ENCODE measurements at regions of chr17 and their contacts with region 1.

Region 1: GRCh38 chr17:39174907-39175694 is 9.1 kb upstream of the ARL5C start:
- DNase-seq: no peak
- ATAC-seq: peak; percentile 93
- H3K4me3 ChIP-seq: no peak overlapping the region
- H3K27ac ChIP-seq: no peak overlapping the region
- H3K4me1 ChIP-seq: no peaks in the 10 kb centered on the region
- H3K27me3 ChIP-seq: no peaks in the 10 kb centered on the region
- CTCF ChIP-seq: peak; percentile 69 to 83 (median 81)
- EP300 ChIP-seq: no peak
- POLR2A ChIP-seq: no peak
- RAD21 ChIP-seq: peak; percentile 49

Region 2: DNA sequence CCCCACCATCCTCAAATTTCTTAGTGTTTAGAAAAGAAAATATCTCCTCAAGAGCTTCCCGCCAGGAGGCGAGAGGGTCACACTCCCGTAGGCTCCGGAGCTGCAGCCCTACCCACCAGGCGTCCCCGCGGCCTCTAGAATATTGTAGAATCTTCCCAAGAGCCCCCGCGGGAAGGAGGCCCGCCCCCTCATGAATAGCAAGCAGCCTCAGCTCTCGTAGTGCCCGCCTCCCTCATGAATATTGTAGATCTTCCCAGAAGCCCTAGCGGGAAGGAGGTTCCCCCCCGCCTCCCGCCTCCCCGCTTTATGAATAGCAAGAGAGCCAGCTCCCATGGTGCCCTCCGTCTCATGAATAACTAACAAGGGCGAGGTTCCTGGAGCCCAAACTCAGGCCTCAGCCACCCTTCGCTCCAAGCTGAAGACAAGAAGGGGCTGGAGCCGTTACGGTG is 207.8 kb before region 1 on chr17 and contains the start of gene FBXO47:
- CTCF ChIA-PET with region 1: no interaction called
- POLR2A ChIA-PET with region 1: no interaction called
- RAD21 ChIA-PET with region 1: no interaction called
- SMC1A ChIA-PET with region 1: no interaction called
- in situ Hi-C with region 1: no loop called
- intact Hi-C with region 1: no loop called
- DNase-seq: no peak
- ATAC-seq: peak; percentile 36; the same call in 2 of the 3 replicates
- H3K4me3 ChIP-seq: no peak within 1 kb of the TSS
- H3K27ac ChIP-seq: no peak within 1 kb of the TSS
- H3K4me1 ChIP-seq: no peaks in the 10 kb centered on the region
- H3K27me3 ChIP-seq: no peaks in the 10 kb centered on the region; a peak in 1 of 4 replicates
- CTCF ChIP-seq: no peak
- EP300 ChIP-seq: no peak
- POLR2A ChIP-seq: no peak
- RAD21 ChIP-seq: no peak
- polyA plus RNA-seq, gene FBXO47: 0.04 to 0.06 TPM

Region 3: GRCh38 chr17:39194089-39194984 is 19.2 kb after region 1 on chr17:
- CTCF ChIA-PET with region 1: interaction called, 19 read pairs
- POLR2A ChIA-PET with region 1: interaction called, 3 read pairs
- RAD21 ChIA-PET with region 1: interaction called, 4 read pairs
- SMC1A ChIA-PET with region 1: no interaction called
- in situ Hi-C with region 1: no loop called
- intact Hi-C with region 1: no loop called
- DNase-seq: no peak
- ATAC-seq: no peak
- H3K4me3 ChIP-seq: no peak overlapping the region
- H3K27ac ChIP-seq: no peak overlapping the region
- H3K4me1 ChIP-seq: peaks cover 14% of the 10 kb centered on the region
- H3K27me3 ChIP-seq: no peaks in the 10 kb centered on the region
- CTCF ChIP-seq: no peak
- EP300 ChIP-seq: no peak
- POLR2A ChIP-seq: no peak
- RAD21 ChIP-seq: no peak

Region 4: GRCh38 chr17:39277110-39277509 is 102.0 kb after region 1 on chr17:
- CTCF ChIA-PET with region 1: no interaction called
- POLR2A ChIA-PET with region 1: no interaction called
- RAD21 ChIA-PET with region 1: no interaction called
- SMC1A ChIA-PET with region 1: no interaction called
- in situ Hi-C with region 1: no loop called
- intact Hi-C with region 1: no loop called
- DNase-seq: peak; percentile 12
- ATAC-seq: peak; percentile 71
- H3K4me3 ChIP-seq: no peak overlapping the region
- H3K27ac ChIP-seq: no peak overlapping the region
- H3K4me1 ChIP-seq: no peaks in the 10 kb centered on the region
- H3K27me3 ChIP-seq: no peaks in the 10 kb centered on the region
- CTCF ChIP-seq: no peak
- EP300 ChIP-seq: no peak
- POLR2A ChIP-seq: no peak
- RAD21 ChIP-seq: no peak

Region 5: GRCh38 chr17:39294060-39294459 is 119.0 kb after region 1 on chr17:
- CTCF ChIA-PET with region 1: no interaction called
- POLR2A ChIA-PET with region 1: no interaction called
- RAD21 ChIA-PET with region 1: no interaction called
- SMC1A ChIA-PET with region 1: no interaction called
- in situ Hi-C with region 1: no loop called
- intact Hi-C with region 1: no loop called
- DNase-seq: no peak
- ATAC-seq: no peak
- H3K4me3 ChIP-seq: no peak overlapping the region
- H3K27ac ChIP-seq: no peak overlapping the region
- H3K4me1 ChIP-seq: no peaks in the 10 kb centered on the region
- H3K27me3 ChIP-seq: no peaks in the 10 kb centered on the region
- CTCF ChIP-seq: no peak
- EP300 ChIP-seq: no peak
- POLR2A ChIP-seq: no peak
- RAD21 ChIP-seq: no peak

Measured in GM12878 (cell line).